Activated CD8-positive, alpha-beta T cell treated with anti-CD3 and anti-CD28 coated beads for 36 hours (primary cell): ENCODE measurements at regions of chr16 and their contacts with region 1.

Region 1: GRCh38 chr16:31472709-31473203 is 804 bp downstream of the TGFB1I1 start:
- DNase-seq: peak; percentile 67
- ATAC-seq: peak; percentile 61
- H3K4me3 Mint-ChIP-seq: peak overlapping the region; percentile 60
- H3K27ac Mint-ChIP-seq: no peak overlapping the region
- H3K4me1 Mint-ChIP-seq: peaks cover 16% of the 10 kb centered on the region
- H3K27me3 Mint-ChIP-seq: peaks cover 19% of the 10 kb centered on the region
- CTCF ChIP-seq: peak; percentile 61

Region 2: DNA sequence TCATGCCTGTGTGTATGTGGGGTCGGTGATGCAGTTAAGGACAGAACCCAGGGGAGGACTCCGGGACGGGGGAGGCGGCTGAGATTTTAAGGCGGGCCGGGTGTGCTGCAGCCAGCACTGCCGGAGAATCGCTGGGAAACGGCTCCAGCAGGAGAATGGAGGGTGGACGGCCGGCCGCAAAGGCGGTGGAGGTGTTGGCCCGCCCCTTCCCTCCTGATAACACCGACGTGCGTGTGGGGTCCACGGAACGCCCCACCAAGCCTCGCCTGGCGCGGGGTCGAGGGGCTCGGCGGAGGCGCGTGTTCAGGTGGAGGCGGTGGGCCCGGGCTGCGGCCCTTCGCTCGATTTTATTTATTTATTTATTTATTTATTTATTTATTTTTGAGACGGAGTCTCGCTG is 30.8 kb before region 1 on chr16:
- CTCF ChIA-PET with region 1: no interaction called
- POLR2A ChIA-PET with region 1: no interaction called
- intact Hi-C with region 1: no loop called
- DNase-seq: no peak
- ATAC-seq: no peak
- H3K4me3 Mint-ChIP-seq: peak overlapping the region; percentile 64
- H3K27ac Mint-ChIP-seq: peak overlapping the region; percentile 12
- H3K4me1 Mint-ChIP-seq: peaks cover 21% of the 10 kb centered on the region
- H3K27me3 Mint-ChIP-seq: peaks cover 6% of the 10 kb centered on the region
- CTCF ChIP-seq: no peak

Region 3: DNA sequence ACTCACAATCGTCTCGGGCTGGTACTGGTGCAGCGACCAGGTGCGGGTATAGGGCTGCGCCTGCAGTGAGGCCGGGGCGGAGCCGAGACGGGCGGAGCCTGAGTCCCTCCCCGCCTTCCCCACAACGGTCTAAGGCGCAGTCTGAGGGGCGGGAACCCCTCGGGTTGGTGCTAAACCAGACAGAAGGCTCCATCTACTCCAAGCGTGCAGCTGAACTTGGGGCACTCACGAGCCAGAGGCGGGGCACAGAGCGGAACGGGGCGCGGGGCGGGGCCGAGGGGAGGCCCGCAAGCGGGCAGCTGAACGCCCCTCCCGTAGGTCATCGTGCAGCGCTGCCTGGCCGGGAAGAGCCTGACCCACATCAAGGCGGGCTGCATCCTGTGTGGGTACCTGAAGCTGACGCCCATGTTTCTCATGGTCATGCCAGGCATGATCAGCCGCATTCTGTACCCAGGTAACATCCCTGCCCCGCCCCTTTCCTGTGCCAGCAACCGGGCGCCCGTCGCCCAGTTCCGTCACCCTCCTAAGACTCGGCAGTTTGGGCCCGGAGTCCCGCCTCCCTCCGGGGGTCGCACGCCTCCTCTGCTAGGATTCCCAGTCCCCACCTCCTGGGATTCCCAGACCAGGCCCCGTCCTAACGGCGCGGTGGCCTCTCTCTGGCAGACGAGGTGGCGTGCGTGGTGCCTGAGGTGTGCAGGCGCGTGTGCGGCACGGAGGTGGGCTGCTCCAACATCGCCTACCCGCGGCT is 15.1 kb after region 1 on chr16:
- CTCF ChIA-PET with region 1: interaction called, 5 read pairs
- POLR2A ChIA-PET with region 1: interaction called, 16 read pairs
- intact Hi-C with region 1: no loop called
- DNase-seq: peak; percentile 74
- ATAC-seq: peak; percentile 94
- H3K4me3 Mint-ChIP-seq: peak overlapping the region; percentile 79
- H3K27ac Mint-ChIP-seq: no peak overlapping the region
- H3K4me1 Mint-ChIP-seq: peaks cover 3% of the 10 kb centered on the region
- H3K27me3 Mint-ChIP-seq: no peaks in the 10 kb centered on the region
- CTCF ChIP-seq: no peak